Ovary (tissue), 10 donors: ENCODE measurements at regions of chr18 and their contacts with region 1.

Region 1: DNA sequence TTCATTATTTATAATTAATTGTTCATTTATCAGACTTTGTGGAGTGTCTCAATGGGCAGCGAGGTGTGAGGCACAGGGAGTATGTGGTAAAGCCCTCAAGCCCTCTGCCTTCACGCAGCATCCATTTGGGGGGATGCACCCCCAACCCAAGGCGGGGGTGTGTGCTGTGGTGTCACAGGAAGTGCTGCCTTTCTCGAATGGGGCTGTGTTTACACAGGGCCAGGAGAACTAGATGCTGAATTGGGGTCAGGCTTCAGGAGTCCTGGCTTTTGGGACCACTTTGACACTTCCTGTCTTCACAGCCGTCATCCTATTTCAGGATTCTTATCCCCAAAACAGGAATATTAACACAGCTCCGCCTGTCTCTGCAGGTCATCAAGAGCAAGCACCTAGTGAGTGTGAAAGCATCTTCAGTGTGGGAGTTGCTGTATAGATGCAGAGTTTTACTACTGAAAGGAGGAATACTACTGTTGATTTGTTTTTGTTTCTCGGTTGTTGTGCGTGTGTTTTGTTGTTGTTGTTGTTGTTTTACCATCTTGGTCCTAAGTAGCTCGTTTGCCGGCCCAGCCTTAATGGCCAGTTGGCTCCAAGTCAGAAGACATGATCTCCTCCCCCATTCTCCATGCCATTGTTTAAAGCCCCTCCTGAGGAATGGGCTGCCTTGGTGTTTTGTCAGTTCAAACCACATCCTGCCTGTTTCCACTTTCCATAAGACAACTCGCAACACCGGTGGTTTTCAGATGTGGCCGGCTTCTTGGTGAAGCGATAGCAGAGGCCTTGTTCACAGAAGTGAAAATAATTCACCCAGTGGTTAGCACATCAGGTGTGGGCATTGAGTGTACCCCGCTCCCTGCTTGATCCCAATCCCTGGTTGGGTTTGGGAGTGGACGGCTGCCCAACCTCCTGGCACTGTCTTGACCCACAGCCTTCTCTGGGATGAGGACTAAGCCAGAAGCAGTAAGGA is 221.3 kb downstream of the BCL2 start:
- DNase-seq: no peak
- H3K4me3 ChIP-seq: no peak overlapping the region
- H3K27ac ChIP-seq: no peak overlapping the region
- H3K4me1 ChIP-seq: no peaks in the 10 kb centered on the region
- H3K27me3 ChIP-seq: no peaks in the 10 kb centered on the region
- CTCF ChIP-seq: no peak
- EP300 ChIP-seq: no peak
- POLR2A ChIP-seq: no peak

Region 2: DNA sequence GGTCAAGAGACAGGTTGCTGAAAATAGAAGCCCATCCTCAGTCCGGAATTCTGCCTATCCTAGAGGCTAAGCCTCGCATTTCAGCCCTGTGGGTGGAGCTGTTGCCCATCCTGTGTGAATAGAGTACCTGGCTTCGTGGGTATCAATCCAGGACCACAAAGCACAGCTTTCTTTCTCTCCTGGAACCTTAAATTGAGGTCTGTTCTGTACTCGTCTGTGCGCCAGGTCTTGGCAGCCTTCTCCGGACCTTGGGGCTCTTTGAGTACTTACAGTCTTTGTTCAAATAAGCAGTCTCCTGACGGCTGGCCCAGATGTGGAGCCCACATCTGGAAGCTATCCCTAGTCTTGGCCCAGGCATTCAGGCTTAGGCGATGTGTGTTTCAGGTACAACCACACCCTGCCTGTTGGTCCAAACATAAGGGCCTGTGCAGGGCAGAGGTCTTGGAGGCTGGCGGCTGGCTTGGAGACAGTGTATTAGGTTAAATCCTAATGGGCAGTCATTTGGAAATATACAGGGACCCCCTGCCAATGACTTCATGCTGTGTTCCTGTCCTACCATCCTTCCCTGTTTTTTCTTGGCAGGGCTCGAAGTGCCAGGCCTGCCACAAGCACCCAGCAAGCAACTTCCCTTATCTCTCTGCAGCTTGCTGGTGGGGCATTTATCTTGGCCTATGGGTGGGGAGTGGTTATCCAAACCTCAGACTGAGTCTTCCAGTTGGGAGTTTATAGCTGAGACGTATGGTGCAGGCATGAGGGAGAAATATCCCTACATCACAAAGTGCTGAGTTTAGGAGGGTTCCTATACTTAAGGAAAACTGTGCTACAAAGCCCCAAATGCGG is 72.8 kb before region 1 on chr18:
- intact Hi-C with region 1: no loop called
- DNase-seq: peak in 1 of 5 donors; percentile 26
- H3K4me3 ChIP-seq: no peak overlapping the region
- H3K27ac ChIP-seq: no peak overlapping the region
- H3K4me1 ChIP-seq: no peaks in the 10 kb centered on the region
- H3K27me3 ChIP-seq: no peaks in the 10 kb centered on the region
- CTCF ChIP-seq: no peak
- EP300 ChIP-seq: no peak
- POLR2A ChIP-seq: no peak

Region 3: GRCh38 chr18:64416990-64417389 is 1318.7 kb after region 1 on chr18:
- intact Hi-C with region 1: loop called in 1 of 4 experiments (anchors 10 kb)
- DNase-seq: no peak
- H3K4me3 ChIP-seq: no peak overlapping the region
- H3K27ac ChIP-seq: no peak overlapping the region
- H3K4me1 ChIP-seq: no peaks in the 10 kb centered on the region
- H3K27me3 ChIP-seq: no peaks in the 10 kb centered on the region
- CTCF ChIP-seq: no peak
- EP300 ChIP-seq: no peak
- POLR2A ChIP-seq: no peak